Activated naive CD4-positive, alpha-beta T cell treated with anti-CD3 and anti-CD28 coated beads for 36 hours (primary cell): ENCODE measurements at regions of chr12 and their contacts with region 1.

Region 1: GRCh38 chr12:122421821-122422729 is at the start of gene CLIP1:
- DNase-seq: peak; percentile 62
- H3K4me3 Mint-ChIP-seq: peak within 1 kb of the TSS; percentile 88
- H3K27ac Mint-ChIP-seq: peak within 1 kb of the TSS; percentile 90
- H3K4me1 Mint-ChIP-seq: peaks cover 38% of the 10 kb centered on the region
- H3K27me3 Mint-ChIP-seq: peaks cover 3% of the 10 kb centered on the region
- total RNA-seq, gene CLIP1: 50.7 to 51.3 TPM

Region 2: DNA sequence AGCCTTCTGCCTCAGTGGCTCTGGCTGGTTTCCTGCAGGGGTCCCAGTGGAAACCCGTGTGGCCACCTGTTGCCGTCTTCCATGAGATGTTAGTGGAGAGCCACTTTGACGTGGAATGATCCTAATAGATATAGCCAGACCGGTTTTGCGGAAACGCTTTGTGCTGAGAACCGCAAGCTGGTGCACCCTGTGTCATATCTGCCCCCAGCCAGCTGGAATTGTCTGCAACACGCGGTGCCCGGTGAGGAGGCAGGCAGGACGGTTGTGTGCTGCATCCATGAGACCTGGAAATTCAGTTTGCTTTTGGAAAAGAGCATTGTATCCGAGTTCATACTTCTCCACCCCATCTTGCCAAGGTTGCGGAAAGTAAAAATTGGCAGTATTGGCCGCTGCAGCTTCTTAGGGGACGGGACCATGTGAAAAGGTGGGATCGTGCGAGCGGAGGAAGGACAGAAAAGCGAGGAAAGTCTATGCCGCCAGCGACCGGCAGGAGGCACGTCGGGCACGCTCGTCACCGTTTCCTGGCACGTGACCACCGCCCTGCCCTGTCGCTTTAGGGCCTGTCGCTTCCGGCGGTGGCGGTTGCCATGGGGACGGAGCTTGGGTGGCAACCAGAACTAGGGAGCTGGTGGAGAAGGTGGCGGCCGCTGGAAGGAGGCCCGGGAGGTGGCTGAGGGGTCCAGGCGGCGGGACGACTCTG is 503.9 kb before region 1 on chr12 and contains the start of gene CFAP251:
- CTCF ChIA-PET with region 1: no interaction called
- intact Hi-C with region 1: no loop called
- DNase-seq: peak; percentile 98
- H3K4me3 Mint-ChIP-seq: peak within 1 kb of the TSS; percentile 69
- H3K27ac Mint-ChIP-seq: peak within 1 kb of the TSS; percentile 78
- H3K4me1 Mint-ChIP-seq: peaks cover 16% of the 10 kb centered on the region
- H3K27me3 Mint-ChIP-seq: no peaks in the 10 kb centered on the region
- total RNA-seq, gene CFAP251: 0.20 to 0.62 TPM

Region 3: GRCh38 chr12:122336015-122336946 is 85.8 kb before region 1 on chr12:
- CTCF ChIA-PET with region 1: interaction called, 3 read pairs
- intact Hi-C with region 1: loop called (anchors 2 kb)
- DNase-seq: peak; percentile 63
- H3K4me3 Mint-ChIP-seq: no peak overlapping the region
- H3K27ac Mint-ChIP-seq: peak overlapping the region; percentile 32
- H3K4me1 Mint-ChIP-seq: peaks cover 11% of the 10 kb centered on the region
- H3K27me3 Mint-ChIP-seq: no peaks in the 10 kb centered on the region

Region 4: DNA sequence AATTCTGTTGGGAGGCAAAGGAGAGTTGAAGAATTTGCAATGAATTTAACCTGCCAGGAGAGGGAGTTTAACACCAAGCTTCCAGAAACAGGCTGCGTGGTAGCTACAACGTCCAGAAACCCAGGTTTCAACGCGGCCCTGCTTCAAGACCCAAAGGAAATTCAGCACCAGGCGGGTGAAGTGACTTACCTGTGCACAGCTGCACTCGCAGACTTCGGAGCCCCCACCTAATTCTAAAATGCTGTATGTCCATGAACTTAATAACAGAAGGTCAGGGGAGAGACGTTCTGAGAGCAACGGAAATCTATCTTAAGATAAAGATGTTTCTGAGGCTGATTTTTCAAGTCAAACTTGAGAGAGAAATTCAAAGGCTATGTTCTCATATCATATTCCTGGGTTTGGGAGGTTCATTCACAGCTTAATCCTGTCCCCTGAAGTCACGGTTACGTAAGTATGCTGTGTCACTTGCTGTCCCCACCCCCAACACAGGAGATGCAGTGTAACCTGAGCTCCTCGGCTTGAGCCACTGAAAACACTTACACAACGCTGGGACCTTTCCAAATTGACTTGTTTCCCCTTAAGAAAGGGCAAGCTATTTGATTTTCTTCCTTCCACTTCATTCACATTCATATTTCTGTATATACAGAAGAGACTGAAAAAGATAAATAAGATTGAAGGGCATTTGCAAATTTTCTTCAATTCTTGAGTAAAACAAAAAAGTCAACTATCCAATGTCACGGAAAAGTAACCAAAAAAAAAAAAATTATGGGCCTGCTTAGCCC is 22.3 kb before region 1 on chr12:
- CTCF ChIA-PET with region 1: interaction called, 18 read pairs
- intact Hi-C with region 1: loop called (anchors 1 kb)
- DNase-seq: peak; percentile 70
- H3K4me3 Mint-ChIP-seq: peak overlapping the region; percentile 51
- H3K27ac Mint-ChIP-seq: peak overlapping the region; percentile 81
- H3K4me1 Mint-ChIP-seq: peaks cover 44% of the 10 kb centered on the region
- H3K27me3 Mint-ChIP-seq: no peaks in the 10 kb centered on the region

Region 5: GRCh38 chr12:122449353-122449752 is 27.3 kb after region 1 on chr12:
- CTCF ChIA-PET with region 1: no interaction called
- intact Hi-C with region 1: loop called (anchors 2 kb)
- DNase-seq: peak; percentile 38
- H3K4me3 Mint-ChIP-seq: no peak overlapping the region
- H3K27ac Mint-ChIP-seq: no peak overlapping the region
- H3K4me1 Mint-ChIP-seq: peaks cover 30% of the 10 kb centered on the region
- H3K27me3 Mint-ChIP-seq: no peaks in the 10 kb centered on the region

Region 6: DNA sequence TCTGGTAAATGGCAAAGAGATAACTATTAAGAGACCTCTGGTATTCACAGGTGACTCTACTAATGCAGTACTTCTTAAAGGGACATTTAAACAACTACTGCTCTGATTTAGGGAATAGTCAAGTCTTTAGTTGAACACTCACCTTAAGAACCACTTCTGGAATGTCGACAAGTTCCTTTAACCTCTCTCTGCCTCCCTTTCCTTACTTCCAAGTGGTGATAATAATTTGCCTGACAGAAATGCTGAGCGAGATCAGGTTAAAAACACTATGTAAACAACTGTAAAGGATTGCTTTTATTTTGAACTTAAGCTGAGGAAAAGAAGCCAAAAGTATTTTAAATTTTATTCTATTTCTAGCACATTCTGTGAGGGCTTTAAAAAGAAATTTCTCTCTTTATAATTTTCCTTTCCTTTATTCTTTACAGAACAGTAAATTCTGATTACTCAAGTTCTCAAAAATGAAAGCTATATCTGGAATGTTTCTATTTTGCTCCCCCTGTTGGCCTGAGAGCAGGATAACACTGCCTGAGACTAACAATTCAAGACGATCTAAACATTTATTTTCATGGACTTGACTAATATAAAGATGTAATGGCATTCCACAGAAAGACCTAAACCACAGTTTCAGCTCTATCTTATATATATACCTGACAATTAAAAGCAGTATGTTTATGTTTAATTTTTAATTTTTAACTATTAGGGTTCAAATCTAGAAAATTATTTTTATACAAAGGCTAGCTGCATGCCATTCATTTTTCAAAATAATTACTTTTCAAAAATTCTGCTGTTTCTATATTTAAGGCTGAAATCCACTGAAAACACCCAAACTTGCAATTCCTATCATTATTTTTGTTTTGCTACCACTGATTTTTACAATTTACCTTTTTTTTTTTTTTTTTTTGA is 49.5 kb after region 1 on chr12:
- CTCF ChIA-PET with region 1: interaction called, 5 read pairs
- intact Hi-C with region 1: loop called (anchors 1 kb)
- DNase-seq: peak; percentile 24
- H3K4me3 Mint-ChIP-seq: no peak overlapping the region
- H3K27ac Mint-ChIP-seq: no peak overlapping the region
- H3K4me1 Mint-ChIP-seq: peaks cover 23% of the 10 kb centered on the region
- H3K27me3 Mint-ChIP-seq: no peaks in the 10 kb centered on the region

Region 7: GRCh38 chr12:122726080-122726558 is 304.0 kb after region 1 on chr12:
- CTCF ChIA-PET with region 1: no interaction called
- intact Hi-C with region 1: loop called (anchors 5 kb)
- DNase-seq: peak; percentile 61
- H3K4me3 Mint-ChIP-seq: peak overlapping the region; percentile 50
- H3K27ac Mint-ChIP-seq: peak overlapping the region; percentile 85
- H3K4me1 Mint-ChIP-seq: peaks cover 76% of the 10 kb centered on the region
- H3K27me3 Mint-ChIP-seq: no peaks in the 10 kb centered on the region

Region 8: DNA sequence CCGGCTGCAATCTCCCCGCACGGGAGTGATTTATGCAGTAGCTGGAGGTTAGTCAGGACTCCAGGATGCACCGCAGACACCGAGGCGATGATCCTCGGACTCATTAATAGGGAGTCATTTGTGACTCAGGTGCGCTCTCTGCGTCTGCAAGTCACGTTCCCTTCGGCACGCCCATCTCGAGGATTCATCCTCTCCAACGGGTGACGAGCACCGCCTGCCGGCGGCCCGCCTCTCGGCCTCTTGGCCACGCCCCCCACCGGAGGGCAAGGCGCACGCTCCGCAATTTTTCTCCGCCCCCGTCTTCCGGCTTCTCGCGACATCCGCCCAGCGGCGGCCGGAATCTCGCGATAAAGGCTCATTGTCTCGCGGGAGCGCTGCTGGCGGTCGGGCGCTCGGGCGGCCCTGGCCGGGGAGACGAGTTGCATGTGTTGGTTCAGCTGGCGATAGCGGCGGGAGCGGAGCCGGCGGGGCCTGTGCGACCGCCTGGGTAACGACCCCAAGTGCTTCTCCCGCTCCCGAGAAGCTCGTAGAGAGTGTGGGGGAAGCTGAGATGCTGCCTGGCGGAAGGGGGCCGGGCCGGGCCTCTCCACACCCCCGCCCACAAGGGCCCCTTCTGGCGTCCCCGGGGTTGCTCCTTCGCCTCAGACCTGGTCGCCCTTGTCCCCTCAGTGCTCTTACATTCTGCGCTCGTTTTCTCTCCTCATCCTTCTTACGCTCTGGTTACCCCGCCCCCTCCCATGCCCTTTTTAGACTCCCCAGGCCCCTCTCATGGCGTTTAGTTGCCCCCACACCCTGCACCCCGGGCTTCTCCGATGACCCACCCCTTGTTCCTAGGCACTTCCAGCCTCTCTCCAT is 330.6 kb after region 1 on chr12 and contains the start of gene DENR:
- CTCF ChIA-PET with region 1: no interaction called
- intact Hi-C with region 1: loop called (anchors 1 kb)
- DNase-seq: peak; percentile 100
- H3K4me3 Mint-ChIP-seq: peak within 1 kb of the TSS; percentile 98
- H3K27ac Mint-ChIP-seq: peak within 1 kb of the TSS; percentile 90
- H3K4me1 Mint-ChIP-seq: peaks cover 51% of the 10 kb centered on the region
- H3K27me3 Mint-ChIP-seq: no peaks in the 10 kb centered on the region
- total RNA-seq, gene DENR: 47.9 to 52.4 TPM